ENCODE measurements at regions of chr20 and their contacts with region 1.

Region 1: DNA sequence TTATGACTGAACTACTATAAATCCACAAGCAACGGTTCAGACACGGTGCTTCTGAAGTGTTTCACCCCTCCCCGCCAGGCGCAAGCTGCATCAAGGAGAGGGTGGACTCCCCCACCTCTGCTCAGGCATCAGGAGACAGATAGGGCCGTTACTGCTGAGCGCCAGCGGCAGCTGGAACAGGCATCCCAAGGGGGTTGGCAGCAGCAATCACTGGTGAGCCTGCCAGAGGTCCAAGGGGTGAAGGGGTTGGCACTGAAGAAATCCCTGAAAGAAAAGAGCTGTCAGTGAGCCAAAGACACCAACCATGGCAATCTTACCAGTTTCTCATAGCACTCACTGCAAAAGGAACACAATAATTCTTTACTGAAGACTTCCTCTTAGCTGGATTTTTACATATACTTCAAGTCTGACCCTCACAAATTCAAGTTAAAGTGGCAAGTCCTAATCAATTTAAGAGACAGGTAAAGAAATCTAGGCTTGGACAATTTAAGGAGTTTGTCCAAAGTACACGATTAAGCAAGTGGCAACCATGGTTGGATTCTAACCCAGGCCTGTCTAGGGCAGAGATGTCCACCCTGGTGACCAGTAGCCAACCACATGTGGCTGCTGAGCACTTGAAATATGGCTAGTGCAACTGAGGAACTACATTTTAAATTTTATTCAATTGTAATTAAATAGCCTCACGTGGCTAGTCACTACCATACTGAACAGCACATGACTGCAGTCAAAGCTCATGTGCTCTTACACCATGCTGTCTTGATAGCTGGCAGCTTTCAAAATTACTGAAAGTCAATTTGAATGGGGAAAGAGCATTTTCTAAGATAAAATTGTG is 21.7 kb upstream of the TBC1D20 start:
- DNase-seq: peak in 2 of 3 donors; percentile 63 to 72
- ATAC-seq: peak in 3 of 4 donors; percentile 59 to 80 (median 67)
- H3K4me3 ChIP-seq: no peak overlapping the region
- H3K27ac ChIP-seq: no peak overlapping the region
- H3K4me1 ChIP-seq: peaks cover 0 to 21% (median 0%) of the 10 kb centered on the region in 4 donors
- H3K27me3 ChIP-seq: no peaks in the 10 kb centered on the region
- CTCF ChIP-seq: no peak
- POLR2A ChIP-seq: no peak

Region 2: DNA sequence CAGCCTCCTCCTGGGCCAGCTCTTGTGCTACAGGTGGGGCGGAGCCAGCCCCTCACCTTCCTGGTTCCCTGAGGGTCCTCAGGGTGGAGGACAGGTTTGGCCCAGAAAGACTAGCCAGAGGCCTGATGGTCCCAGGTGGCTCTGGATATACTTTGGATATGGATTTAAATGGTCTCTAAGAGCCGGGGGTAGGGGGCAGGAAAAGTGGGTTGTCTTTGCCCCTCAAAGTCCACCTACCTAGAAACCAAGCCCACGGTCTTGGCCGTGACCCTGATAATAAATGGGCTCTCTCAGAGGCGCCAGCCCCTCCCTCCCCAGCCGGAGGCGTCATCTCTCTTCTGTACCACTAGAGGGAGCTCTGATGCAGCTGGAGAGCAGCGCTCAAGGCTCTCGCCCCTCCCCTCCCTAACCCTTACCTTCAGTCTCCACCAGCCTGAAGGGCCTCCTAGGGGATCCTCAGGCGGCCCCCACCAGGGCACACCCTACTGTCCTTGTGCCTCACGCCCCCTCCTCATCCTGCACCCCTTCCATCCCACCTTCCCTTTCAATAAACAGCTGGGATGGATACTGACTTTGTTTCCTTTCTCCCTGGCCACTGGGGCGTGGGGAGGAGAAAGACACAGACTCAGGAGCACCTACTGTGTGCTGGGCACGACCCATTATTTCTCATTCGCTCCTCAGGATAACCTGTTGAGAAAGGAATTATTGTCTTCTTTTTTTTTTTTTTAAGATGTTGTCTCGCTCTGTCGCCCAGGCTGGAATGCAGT is 129.5 kb before region 1 on chr20:
- intact Hi-C with region 1: loop called (anchors 5 to 10 kb)
- DNase-seq: peak; percentile 65 to 75 (median 74)
- ATAC-seq: peak; percentile 97 to 99 (median 98)
- H3K4me3 ChIP-seq: no peak overlapping the region
- H3K27ac ChIP-seq: no peak overlapping the region
- H3K4me1 ChIP-seq: peaks cover 0 to 3% (median 0%) of the 10 kb centered on the region in 4 donors
- H3K27me3 ChIP-seq: no peaks in the 10 kb centered on the region
- CTCF ChIP-seq: peak; percentile 93 to 98 (median 97)
- POLR2A ChIP-seq: no peak